ENCODE measurements at regions of chr6 and their contacts with region 1.

Region 1: GRCh38 chr6:18503593-18504231 is 116.6 kb downstream of the RNF144B start:
- DNase-seq: peak in 1 of 2 donors; percentile 54
- ATAC-seq: peak; percentile 87
- H3K4me3 ChIP-seq: peak overlapping the region in 1 of 2 donors; percentile 25
- H3K27ac ChIP-seq: no peak overlapping the region
- H3K4me1 ChIP-seq: no peaks in the 10 kb centered on the region
- H3K27me3 ChIP-seq: no peaks in the 10 kb centered on the region

Region 2: DNA sequence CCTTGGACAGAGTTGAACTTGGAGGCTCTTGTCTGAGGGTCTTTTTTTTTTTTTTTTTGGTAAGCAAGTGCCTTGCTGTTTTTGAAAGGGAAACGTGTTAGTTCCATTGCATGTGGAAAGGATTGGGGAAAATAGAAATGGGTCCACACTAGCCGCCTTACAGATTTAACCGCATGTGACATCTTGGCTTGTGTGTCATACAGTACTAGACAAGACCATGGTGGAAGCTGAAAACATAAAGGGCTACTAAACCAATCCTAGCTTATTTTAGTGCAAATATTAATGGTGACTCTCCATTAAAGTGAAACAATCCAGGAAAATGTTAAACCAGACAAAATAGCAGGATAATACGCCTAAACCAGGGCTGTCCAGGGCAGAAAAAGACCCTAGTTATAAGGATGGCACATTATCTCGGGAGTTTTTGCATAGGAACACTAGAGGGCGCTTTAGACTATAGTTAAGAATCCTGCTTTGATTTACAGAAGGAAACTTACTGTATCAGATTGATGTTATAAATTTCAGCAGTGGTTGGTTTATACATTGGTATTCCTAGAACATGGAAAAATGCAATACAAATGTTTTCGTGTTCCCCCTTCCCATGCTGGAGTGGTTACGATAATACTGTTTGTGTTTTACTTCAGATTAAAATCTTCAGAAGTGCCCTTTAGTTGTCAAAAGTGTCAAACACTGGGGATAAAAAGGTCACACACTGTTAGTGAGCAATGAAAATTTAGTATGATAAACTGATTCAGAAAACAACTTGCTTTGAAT is 179.6 kb before region 1 on chr6:
- intact Hi-C with region 1: loop called (anchors 1 kb)
- DNase-seq: no peak
- ATAC-seq: no peak
- H3K4me3 ChIP-seq: no peak overlapping the region
- H3K27ac ChIP-seq: no peak overlapping the region
- H3K4me1 ChIP-seq: peaks cover 0 to 4% of the 10 kb centered on the region in 2 donors
- H3K27me3 ChIP-seq: no peaks in the 10 kb centered on the region

Region 3: GRCh38 chr6:18485660-18486435 is 17.9 kb before region 1 on chr6:
- intact Hi-C with region 1: no loop called
- DNase-seq: no peak
- ATAC-seq: no peak
- H3K4me3 ChIP-seq: no peak overlapping the region
- H3K27ac ChIP-seq: no peak overlapping the region
- H3K4me1 ChIP-seq: no peaks in the 10 kb centered on the region
- H3K27me3 ChIP-seq: no peaks in the 10 kb centered on the region